Right lobe of liver (tissue), 6 donors: ENCODE measurements at regions of chr16 and their contacts with region 1.

Region 1: DNA sequence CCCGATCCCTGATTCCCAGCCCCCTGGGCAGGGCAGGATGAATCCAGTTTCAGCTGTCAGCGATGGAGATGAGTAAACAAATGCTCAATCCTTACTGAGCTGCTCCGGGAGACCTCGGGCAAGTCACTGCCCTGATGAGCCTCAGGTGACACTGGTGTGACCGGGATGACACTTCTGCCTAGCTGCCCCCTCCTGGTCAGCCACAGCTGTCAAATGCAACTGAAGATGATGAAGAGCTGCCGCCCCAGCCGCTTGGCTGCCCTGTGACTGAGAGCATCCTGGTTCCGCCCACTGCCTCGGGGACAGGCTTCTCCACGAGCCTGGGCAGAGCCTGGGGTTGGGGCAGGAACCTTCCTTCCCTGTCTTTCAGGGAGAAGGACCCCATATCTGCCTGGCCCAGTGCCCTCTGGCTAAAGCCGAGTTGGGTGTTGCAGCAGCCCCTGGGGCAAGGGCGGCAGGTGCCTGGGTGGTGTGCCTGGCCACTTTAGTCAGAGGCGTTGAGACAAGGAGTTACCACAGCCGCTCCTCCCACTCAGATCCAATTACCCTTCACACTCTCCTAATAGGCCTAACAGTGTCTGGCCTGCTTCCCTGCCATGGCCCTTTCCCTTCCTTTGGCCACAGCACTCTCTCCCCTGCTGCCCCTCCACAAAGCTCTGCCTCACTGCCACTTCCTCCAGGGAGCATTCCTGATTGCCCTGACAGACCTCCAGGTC is 5.5 kb downstream of the CCL17 start:
- DNase-seq: no peak
- ATAC-seq: peak in 2 of 4 donors; percentile 7 to 39
- H3K4me3 ChIP-seq: no peak overlapping the region
- H3K27ac ChIP-seq: no peak overlapping the region
- H3K4me1 ChIP-seq: no peaks in the 10 kb centered on the region
- H3K27me3 ChIP-seq: no peaks in the 10 kb centered on the region
- CTCF ChIP-seq: no peak
- POLR2A ChIP-seq: no peak

Region 2: DNA sequence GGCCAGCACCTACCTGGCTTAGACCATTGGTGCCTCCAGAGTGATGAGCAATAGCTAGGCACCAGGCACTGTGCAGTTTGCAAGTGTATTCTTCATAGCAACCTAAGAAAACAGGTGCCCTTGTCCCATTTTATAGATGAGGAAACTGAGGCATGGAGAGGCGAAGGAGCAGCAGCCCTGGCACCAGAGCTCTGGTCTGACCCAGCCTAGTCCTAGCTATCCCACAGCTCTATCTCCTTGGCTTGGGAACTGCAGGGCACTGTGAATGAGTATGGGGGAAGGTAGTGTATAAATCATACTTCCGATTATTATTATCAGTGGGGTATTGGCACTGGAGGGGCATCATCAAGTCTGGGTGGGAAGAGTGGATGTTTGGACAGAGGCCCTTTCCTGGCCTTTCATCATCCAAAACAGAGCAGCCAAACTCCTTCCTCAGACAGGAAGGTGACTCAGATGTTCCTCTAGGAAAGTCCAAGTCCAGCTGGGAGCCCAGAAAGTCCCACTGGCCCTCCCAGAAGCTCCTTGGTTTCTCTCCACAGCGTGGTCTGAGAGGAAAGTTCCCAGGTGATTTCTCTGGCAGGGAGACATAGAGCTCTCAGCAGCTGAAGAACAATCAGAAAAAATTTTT is 93.5 kb before region 1 on chr16:
- intact Hi-C with region 1: loop called in 1 of 2 experiments (anchors 5 kb)
- DNase-seq: no peak
- ATAC-seq: peak; percentile 62 to 71 (median 66)
- H3K4me3 ChIP-seq: no peak overlapping the region
- H3K27ac ChIP-seq: peak overlapping the region in 1 of 3 donors; percentile 8
- H3K4me1 ChIP-seq: peaks cover 0 to 7% (median 0%) of the 10 kb centered on the region in 4 donors
- H3K27me3 ChIP-seq: no peaks in the 10 kb centered on the region
- CTCF ChIP-seq: no peak
- POLR2A ChIP-seq: no peak